A549 (cell line): ENCODE measurements at regions of chr17 and their contacts with region 1.

Region 1: GRCh38 chr17:28335201-28335955 is at the starts of genes IFT20 and TNFAIP1:
- DNase-seq: peak; percentile 98 to 100
- ATAC-seq: peak; percentile 91 to 96
- H3K4me3 ChIP-seq: peak within 1 kb of the TSS; percentile 86
- H3K27ac ChIP-seq: peak within 1 kb of the TSS; percentile 87 to 92
- H3K4me1 ChIP-seq: peaks cover 31% of the 10 kb centered on the region
- CTCF ChIP-seq: no peak
- EP300 ChIP-seq: no peak
- POLR2A ChIP-seq: peak; percentile 90
- RAD21 ChIP-seq: no peak; a peak in 1 of 5 replicates
- polyA plus RNA-seq, gene IFT20: 58.7 and 72.1 TPM in 2 replicates
- polyA plus RNA-seq, gene TNFAIP1: 66.2 and 68.3 TPM in 2 replicates

Region 2: DNA sequence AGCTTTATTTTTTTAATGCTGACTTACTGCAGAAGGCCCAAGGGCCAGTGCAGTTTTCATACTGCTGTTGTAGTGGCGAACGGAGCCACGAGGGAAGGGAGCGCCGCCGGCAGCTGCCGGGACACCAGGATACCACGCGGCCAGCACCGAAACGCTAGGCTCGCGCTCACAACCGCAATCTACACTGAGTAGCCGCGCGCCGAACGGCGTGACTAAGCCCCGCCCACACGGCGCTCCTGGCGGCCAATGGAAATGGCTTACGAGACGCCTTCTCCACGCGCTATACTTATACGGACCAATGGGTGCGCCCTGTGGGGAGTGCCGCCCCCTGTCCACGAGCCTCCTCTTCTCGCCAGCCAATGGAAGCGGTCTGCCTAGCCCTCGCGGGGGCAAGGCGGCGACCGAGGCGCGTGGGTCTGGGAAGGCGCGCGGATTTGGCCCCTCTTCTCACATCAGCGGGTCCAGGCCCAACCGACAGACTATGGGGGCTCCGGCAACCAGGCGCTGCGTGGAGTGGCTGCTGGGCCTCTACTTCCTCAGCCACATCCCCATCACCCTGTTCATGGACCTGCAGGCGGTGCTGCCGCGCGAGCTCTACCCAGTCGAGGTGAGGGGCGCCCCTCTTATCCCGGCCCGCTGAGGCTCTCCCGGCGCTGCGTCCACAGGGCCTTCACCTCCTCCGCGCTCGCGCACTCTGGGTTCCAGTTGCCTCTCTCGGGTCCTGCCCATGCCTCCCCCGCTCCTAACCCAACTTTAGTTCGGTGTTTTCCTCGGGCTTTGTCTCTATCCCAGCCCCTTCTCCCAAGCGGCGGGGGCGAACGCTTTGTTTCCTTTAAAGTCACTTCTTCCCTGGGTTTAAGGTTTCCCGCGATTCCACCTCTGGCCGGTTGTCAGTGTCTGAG is 16.4 kb before region 1 on chr17 and contains the start of gene TMEM97:
- CTCF ChIA-PET with region 1: interaction called, 39 read pairs
- POLR2A ChIA-PET with region 1: interaction called, 14 read pairs
- DNase-seq: peak; percentile 98
- ATAC-seq: peak; percentile 97 to 99
- H3K4me3 ChIP-seq: peak within 1 kb of the TSS; percentile 73
- H3K27ac ChIP-seq: peak within 1 kb of the TSS; percentile 76 to 88
- H3K4me1 ChIP-seq: peaks cover 45% of the 10 kb centered on the region
- CTCF ChIP-seq: no peak
- EP300 ChIP-seq: no peak
- POLR2A ChIP-seq: peak; percentile 80
- RAD21 ChIP-seq: no peak; a peak in 3 of 5 replicates
- polyA plus RNA-seq, gene TMEM97: 90.9 and 98.7 TPM in 2 replicates

Region 3: GRCh38 chr17:28346746-28347246 is 11.4 kb after region 1 on chr17:
- CTCF ChIA-PET with region 1: interaction called, 41 read pairs
- POLR2A ChIA-PET with region 1: interaction called, 37 read pairs
- DNase-seq: peak in 1 of 2 experiments; percentile 48
- ATAC-seq: peak in 1 of 2 experiments; percentile 30; a peak in 2 of 6 replicates
- H3K4me3 ChIP-seq: no peak overlapping the region
- H3K27ac ChIP-seq: no peak overlapping the region
- H3K4me1 ChIP-seq: no peaks in the 10 kb centered on the region
- CTCF ChIP-seq: peak; percentile 10; the same call in 1 of the 3 replicates
- EP300 ChIP-seq: no peak
- POLR2A ChIP-seq: no peak
- RAD21 ChIP-seq: peak; percentile 27 to 37; a peak in 2 of 5 replicates

Region 4: GRCh38 chr17:28357061-28357900 is 21.9 kb after region 1 on chr17 and contains the start of gene POLDIP2:
- CTCF ChIA-PET with region 1: interaction called, 11 read pairs
- POLR2A ChIA-PET with region 1: interaction called, 65 read pairs
- DNase-seq: peak; percentile 93 to 96
- ATAC-seq: peak; percentile 98 to 100
- H3K4me3 ChIP-seq: peak within 1 kb of the TSS; percentile 84
- H3K27ac ChIP-seq: peak within 1 kb of the TSS; percentile 93 to 96
- H3K4me1 ChIP-seq: peaks cover 16% of the 10 kb centered on the region
- CTCF ChIP-seq: no peak
- EP300 ChIP-seq: peak in 1 of 2 experiments; percentile 30; a peak in 1 of 5 replicates
- POLR2A ChIP-seq: peak; percentile 93
- RAD21 ChIP-seq: peak in 1 of 2 experiments; percentile 51; a peak in 3 of 5 replicates
- polyA plus RNA-seq, gene POLDIP2: 132 and 162 TPM in 2 replicates

Region 5: GRCh38 chr17:28426081-28426519 is 90.7 kb after region 1 on chr17:
- CTCF ChIA-PET with region 1: no interaction called
- POLR2A ChIA-PET with region 1: no interaction called
- DNase-seq: peak; percentile 47 to 58
- ATAC-seq: peak; percentile 89 to 99
- H3K4me3 ChIP-seq: no peak overlapping the region
- H3K27ac ChIP-seq: no peak overlapping the region
- H3K4me1 ChIP-seq: no peaks in the 10 kb centered on the region
- CTCF ChIP-seq: no peak
- EP300 ChIP-seq: no peak
- POLR2A ChIP-seq: no peak
- RAD21 ChIP-seq: peak in 1 of 2 experiments; percentile 37; a peak in 2 of 5 replicates